GM12878 (cell line): ENCODE measurements at regions of chr6 and their contacts with region 1.

Region 1: GRCh38 chr6:16761471-16762267 is 409 bp upstream of the ATXN1 start:
- DNase-seq: no peak
- ATAC-seq: peak; percentile 64
- H3K4me3 ChIP-seq: peak overlapping the region; percentile 80
- H3K27ac ChIP-seq: peak overlapping the region; percentile 68
- H3K4me1 ChIP-seq: peaks cover 8% of the 10 kb centered on the region; the same call in 1 of the 2 replicates
- H3K27me3 ChIP-seq: no peaks in the 10 kb centered on the region
- CTCF ChIP-seq: peak; percentile 24 to 48 (median 41); a peak in 3 of 6 replicates
- EP300 ChIP-seq: no peak; a peak in 1 of 4 replicates
- POLR2A ChIP-seq: peak; percentile 68
- RAD21 ChIP-seq: peak; percentile 64

Region 2: DNA sequence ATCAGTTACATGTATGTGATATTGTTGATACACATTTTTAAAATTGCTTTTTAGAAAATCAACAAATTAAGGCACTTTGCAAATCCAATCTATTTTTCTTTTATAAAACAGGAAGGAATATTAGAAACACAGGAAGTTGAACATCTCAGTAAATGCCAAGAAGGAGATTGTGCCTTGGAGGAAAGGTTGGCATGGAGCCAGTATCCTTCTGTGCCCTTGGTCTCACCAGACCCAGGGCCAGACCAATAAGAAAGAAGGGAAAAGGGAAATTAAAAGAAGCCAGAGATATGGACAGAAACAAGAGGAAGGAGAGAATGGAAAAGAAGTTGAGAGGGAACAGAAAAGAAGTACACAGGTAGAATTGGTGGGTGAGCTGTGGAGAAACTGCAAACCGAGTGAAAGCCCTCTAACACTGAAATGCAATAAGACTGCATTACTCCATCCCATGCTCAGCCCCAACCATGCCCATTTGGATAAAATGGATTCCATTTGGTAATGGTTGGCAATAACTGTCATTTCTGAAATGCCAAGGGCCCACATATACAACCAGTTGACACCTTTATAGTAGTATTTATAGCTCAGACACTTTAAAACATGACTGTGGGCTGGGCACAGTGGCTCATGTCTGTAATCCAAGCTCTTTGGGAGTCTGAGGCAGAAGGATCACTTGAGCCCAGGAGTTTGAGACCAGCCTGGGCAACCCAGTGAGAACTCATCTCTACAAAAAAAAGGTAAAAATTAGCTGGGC is 389.5 kb before region 1 on chr6:
- CTCF ChIA-PET with region 1: interaction called, 10 read pairs
- POLR2A ChIA-PET with region 1: no interaction called
- RAD21 ChIA-PET with region 1: interaction called, 13 read pairs
- SMC1A ChIA-PET with region 1: interaction called, 6 read pairs
- in situ Hi-C with region 1: no loop called
- intact Hi-C with region 1: no loop called
- DNase-seq: no peak
- ATAC-seq: no peak
- H3K4me3 ChIP-seq: no peak overlapping the region
- H3K27ac ChIP-seq: no peak overlapping the region
- H3K4me1 ChIP-seq: peaks cover 23% of the 10 kb centered on the region
- H3K27me3 ChIP-seq: no peaks in the 10 kb centered on the region
- CTCF ChIP-seq: no peak
- EP300 ChIP-seq: no peak
- POLR2A ChIP-seq: no peak
- RAD21 ChIP-seq: no peak

Region 3: GRCh38 chr6:16481697-16482399 is 279.8 kb before region 1 on chr6:
- CTCF ChIA-PET with region 1: interaction called, 4 read pairs
- POLR2A ChIA-PET with region 1: interaction called, 3 read pairs
- RAD21 ChIA-PET with region 1: interaction called, 20 read pairs
- SMC1A ChIA-PET with region 1: interaction called, 10 read pairs
- in situ Hi-C with region 1: no loop called
- intact Hi-C with region 1: no loop called
- DNase-seq: no peak
- ATAC-seq: peak; percentile 61
- H3K4me3 ChIP-seq: peak overlapping the region; percentile 20; the same call in 1 of the 2 replicates
- H3K27ac ChIP-seq: peak overlapping the region; percentile 83
- H3K4me1 ChIP-seq: peaks cover 65% of the 10 kb centered on the region
- H3K27me3 ChIP-seq: no peaks in the 10 kb centered on the region
- CTCF ChIP-seq: no peak
- EP300 ChIP-seq: peak; percentile 68 to 77; a peak in 3 of 4 replicates
- POLR2A ChIP-seq: no peak
- RAD21 ChIP-seq: peak; percentile 3; the same call in 1 of the 2 replicates

Region 4: GRCh38 chr6:16540804-16541752 is 220.6 kb before region 1 on chr6:
- CTCF ChIA-PET with region 1: interaction called, 12 read pairs
- POLR2A ChIA-PET with region 1: no interaction called
- RAD21 ChIA-PET with region 1: interaction called, 11 read pairs
- SMC1A ChIA-PET with region 1: interaction called, 5 read pairs
- in situ Hi-C with region 1: no loop called
- intact Hi-C with region 1: no loop called
- DNase-seq: no peak
- ATAC-seq: peak; percentile 93
- H3K4me3 ChIP-seq: no peak overlapping the region
- H3K27ac ChIP-seq: no peak overlapping the region
- H3K4me1 ChIP-seq: peaks cover 7% of the 10 kb centered on the region
- H3K27me3 ChIP-seq: no peaks in the 10 kb centered on the region
- CTCF ChIP-seq: peak; percentile 9 to 26 (median 13); a peak in 3 of 6 replicates
- EP300 ChIP-seq: peak in 1 of 2 experiments; percentile 44; a peak in 1 of 4 replicates
- POLR2A ChIP-seq: no peak
- RAD21 ChIP-seq: 0 out of 2 replicates have a peak, but pooled peaks have one; percentile 23

Region 5: GRCh38 chr6:16690608-16691198 is 71.0 kb before region 1 on chr6:
- CTCF ChIA-PET with region 1: interaction called, 7 read pairs
- POLR2A ChIA-PET with region 1: interaction called, 3 read pairs
- RAD21 ChIA-PET with region 1: interaction called, 8 read pairs
- SMC1A ChIA-PET with region 1: interaction called, 19 read pairs
- in situ Hi-C with region 1: no loop called
- intact Hi-C with region 1: loop called (anchors 5 kb)
- DNase-seq: no peak
- ATAC-seq: peak; percentile 92
- H3K4me3 ChIP-seq: peak overlapping the region; percentile 13; the same call in 1 of the 2 replicates
- H3K27ac ChIP-seq: peak overlapping the region; percentile 13; the same call in 1 of the 2 replicates
- H3K4me1 ChIP-seq: peaks cover 44% of the 10 kb centered on the region
- H3K27me3 ChIP-seq: no peaks in the 10 kb centered on the region
- CTCF ChIP-seq: no peak
- EP300 ChIP-seq: peak; percentile 73 to 82
- POLR2A ChIP-seq: peak; percentile 32; the same call in 1 of the 2 replicates
- RAD21 ChIP-seq: no peak

Region 6: GRCh38 chr6:16747232-16748024 is 14.2 kb before region 1 on chr6:
- CTCF ChIA-PET with region 1: interaction called, 12 read pairs
- POLR2A ChIA-PET with region 1: interaction called, 5 read pairs
- RAD21 ChIA-PET with region 1: interaction called, 11 read pairs
- SMC1A ChIA-PET with region 1: interaction called, 6 read pairs
- in situ Hi-C with region 1: no loop called
- intact Hi-C with region 1: no loop called
- DNase-seq: no peak
- ATAC-seq: peak; percentile 44
- H3K4me3 ChIP-seq: no peak overlapping the region
- H3K27ac ChIP-seq: no peak overlapping the region
- H3K4me1 ChIP-seq: no peaks in the 10 kb centered on the region
- H3K27me3 ChIP-seq: no peaks in the 10 kb centered on the region
- CTCF ChIP-seq: no peak
- EP300 ChIP-seq: no peak
- POLR2A ChIP-seq: no peak
- RAD21 ChIP-seq: no peak

Region 7: GRCh38 chr6:17258749-17259148 is 497.1 kb after region 1 on chr6:
- CTCF ChIA-PET with region 1: no interaction called
- POLR2A ChIA-PET with region 1: no interaction called
- RAD21 ChIA-PET with region 1: no interaction called
- SMC1A ChIA-PET with region 1: no interaction called
- in situ Hi-C with region 1: no loop called
- intact Hi-C with region 1: no loop called
- DNase-seq: no peak
- ATAC-seq: no peak
- H3K4me3 ChIP-seq: no peak overlapping the region
- H3K27ac ChIP-seq: no peak overlapping the region
- H3K4me1 ChIP-seq: no peaks in the 10 kb centered on the region
- H3K27me3 ChIP-seq: no peaks in the 10 kb centered on the region
- CTCF ChIP-seq: no peak
- EP300 ChIP-seq: no peak
- POLR2A ChIP-seq: no peak
- RAD21 ChIP-seq: no peak